Thyroid gland (tissue), 4 donors: ENCODE measurements at regions of chr4 and their contacts with region 1.

Region 1: DNA sequence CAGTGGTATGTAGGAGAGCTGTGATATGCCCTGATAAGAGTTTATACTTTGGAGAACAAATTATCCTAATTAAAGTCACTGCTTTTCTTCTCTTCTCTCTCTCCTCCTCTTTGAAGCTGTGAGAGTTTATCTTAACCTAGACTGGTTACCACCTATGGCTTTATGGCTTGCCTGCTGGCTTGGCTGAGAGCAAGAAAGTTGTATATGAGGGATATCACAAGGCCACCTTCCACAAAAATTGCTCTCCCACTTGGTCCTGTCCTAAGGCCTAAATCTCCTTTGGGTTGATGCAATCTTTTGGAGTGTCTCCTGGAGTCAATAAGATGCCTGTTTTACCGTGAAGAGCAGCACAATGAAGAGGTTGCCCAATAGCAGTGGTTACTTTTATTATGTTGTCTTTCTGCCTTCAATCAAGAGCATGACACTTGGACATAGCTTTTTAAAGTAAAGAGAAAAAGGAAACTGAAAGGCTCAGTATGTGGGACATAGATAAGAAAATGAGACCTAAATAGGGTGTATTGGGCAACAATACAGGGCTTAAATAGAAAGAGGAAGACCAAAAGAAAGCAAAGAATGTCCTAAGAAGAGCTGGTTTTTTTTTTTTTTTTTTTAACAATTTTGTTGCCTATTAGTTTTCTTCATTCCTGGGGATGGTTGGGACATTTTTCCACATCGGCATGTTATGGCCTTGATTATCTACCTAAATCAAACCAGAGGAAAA is 9.2 kb downstream of the GUCY1A1 start:
- DNase-seq: no peak
- H3K4me3 ChIP-seq: no peak overlapping the region
- H3K27ac ChIP-seq: peak overlapping the region in 1 of 3 donors; percentile 1
- H3K4me1 ChIP-seq: peaks cover 0 to 8% of the 10 kb centered on the region in 2 donors
- H3K27me3 ChIP-seq: no peaks in the 10 kb centered on the region
- CTCF ChIP-seq: no peak
- POLR2A ChIP-seq: no peak

Region 2: DNA sequence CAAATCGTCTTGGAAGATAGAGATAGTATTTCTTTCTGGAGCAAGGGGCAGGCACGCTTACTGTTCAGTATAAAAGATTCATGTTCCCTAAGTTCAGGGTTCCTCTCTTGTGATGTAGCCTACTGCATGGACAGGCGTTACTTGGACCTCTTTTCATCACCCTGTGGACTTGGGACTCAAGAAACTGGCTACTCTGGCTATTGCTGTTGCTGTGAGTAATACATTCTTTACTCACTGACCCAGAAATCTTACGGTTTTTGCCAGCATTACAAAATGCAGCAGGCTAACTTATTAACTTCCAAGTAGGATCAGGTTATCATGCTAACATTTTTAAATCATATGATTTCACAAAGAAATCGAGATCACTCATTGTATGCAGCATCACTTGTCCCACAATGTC is 70.1 kb after region 1 on chr4:
- intact Hi-C with region 1: loop called (anchors 10 kb)
- DNase-seq: no peak
- H3K4me3 ChIP-seq: no peak overlapping the region
- H3K27ac ChIP-seq: no peak overlapping the region
- H3K4me1 ChIP-seq: no peaks in the 10 kb centered on the region
- H3K27me3 ChIP-seq: no peaks in the 10 kb centered on the region
- CTCF ChIP-seq: no peak
- POLR2A ChIP-seq: no peak